GM12878 (cell line): ENCODE measurements at regions of chr1 and their contacts with region 1.

Region 1: GRCh38 chr1:184691719-184692324 is 62.8 kb downstream of the EDEM3 start:
- DNase-seq: no peak
- ATAC-seq: peak; percentile 42; the same call in 1 of the 3 replicates
- H3K4me3 ChIP-seq: no peak overlapping the region
- H3K27ac ChIP-seq: no peak overlapping the region
- H3K4me1 ChIP-seq: no peaks in the 10 kb centered on the region
- H3K27me3 ChIP-seq: no peaks in the 10 kb centered on the region
- CTCF ChIP-seq: peak; percentile 54 to 62 (median 58); a peak in 5 of 6 replicates
- EP300 ChIP-seq: no peak
- POLR2A ChIP-seq: no peak
- RAD21 ChIP-seq: peak; percentile 74

Region 2: DNA sequence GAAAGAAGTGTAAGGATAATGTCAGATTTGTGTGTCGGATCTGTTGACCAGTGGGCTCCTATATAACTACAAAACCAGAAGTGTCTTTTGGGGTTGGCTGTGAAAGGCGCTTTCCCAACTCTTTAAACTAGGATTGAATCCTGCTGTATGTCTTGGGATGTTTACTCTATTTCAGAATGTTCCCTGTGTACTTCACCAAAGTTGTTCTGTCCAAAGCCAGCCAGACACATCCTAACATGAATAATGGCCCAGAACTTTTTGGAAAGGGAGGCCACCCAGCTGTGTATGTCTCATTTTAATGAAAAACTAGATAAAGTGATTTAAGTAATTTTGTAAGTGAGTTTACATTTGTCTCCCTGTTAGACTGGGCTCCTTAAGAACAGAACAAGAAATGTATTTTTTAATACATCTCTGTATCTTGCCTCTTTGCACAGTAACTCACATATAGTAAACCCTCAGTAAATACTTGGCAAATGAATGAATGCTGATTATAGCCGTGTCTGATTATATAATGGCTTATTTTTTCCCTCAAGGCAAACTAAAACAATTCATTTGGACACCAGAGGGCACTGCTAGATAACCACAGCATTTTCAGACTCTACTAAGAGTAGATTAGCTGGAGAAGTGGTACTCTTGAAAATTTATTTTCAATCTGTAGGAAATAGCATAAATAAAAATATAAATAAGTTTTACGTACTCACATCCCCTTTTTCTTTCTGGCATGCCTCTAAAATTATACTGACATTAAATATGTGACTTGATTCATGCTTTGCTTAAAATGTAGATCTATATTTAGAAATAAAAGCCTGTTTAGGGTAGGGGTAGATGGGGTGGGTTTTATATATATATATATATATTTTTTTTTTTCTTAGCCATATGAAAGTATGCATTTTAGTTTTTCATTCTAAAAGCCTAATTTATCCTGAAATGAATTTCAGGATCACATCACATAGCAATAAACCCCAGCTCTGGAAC is 616.5 kb before region 1 on chr1:
- CTCF ChIA-PET with region 1: interaction called, 14 read pairs
- POLR2A ChIA-PET with region 1: no interaction called
- RAD21 ChIA-PET with region 1: interaction called, 3 read pairs
- SMC1A ChIA-PET with region 1: no interaction called
- in situ Hi-C with region 1: no loop called
- intact Hi-C with region 1: no loop called
- DNase-seq: no peak
- ATAC-seq: peak; percentile 91
- H3K4me3 ChIP-seq: no peak overlapping the region
- H3K27ac ChIP-seq: no peak overlapping the region
- H3K4me1 ChIP-seq: no peaks in the 10 kb centered on the region
- H3K27me3 ChIP-seq: no peaks in the 10 kb centered on the region
- CTCF ChIP-seq: peak; percentile 52 to 74 (median 62)
- EP300 ChIP-seq: 0 out of 4 replicates have a peak, but pooled peaks of 1 of the 2 experiments have one; percentile 12
- POLR2A ChIP-seq: no peak
- RAD21 ChIP-seq: peak; percentile 96

Region 3: GRCh38 chr1:184649451-184649888 is 42.4 kb before region 1 on chr1:
- CTCF ChIA-PET with region 1: no interaction called
- POLR2A ChIA-PET with region 1: no interaction called
- RAD21 ChIA-PET with region 1: no interaction called
- SMC1A ChIA-PET with region 1: no interaction called
- in situ Hi-C with region 1: no loop called
- intact Hi-C with region 1: no loop called
- DNase-seq: peak; percentile 57
- ATAC-seq: peak; percentile 55
- H3K4me3 ChIP-seq: peak overlapping the region; percentile 50; the same call in 1 of the 2 replicates
- H3K27ac ChIP-seq: peak overlapping the region; percentile 74
- H3K4me1 ChIP-seq: peaks cover 30% of the 10 kb centered on the region
- H3K27me3 ChIP-seq: no peaks in the 10 kb centered on the region
- CTCF ChIP-seq: no peak
- EP300 ChIP-seq: no peak
- POLR2A ChIP-seq: no peak
- RAD21 ChIP-seq: no peak

Region 4: DNA sequence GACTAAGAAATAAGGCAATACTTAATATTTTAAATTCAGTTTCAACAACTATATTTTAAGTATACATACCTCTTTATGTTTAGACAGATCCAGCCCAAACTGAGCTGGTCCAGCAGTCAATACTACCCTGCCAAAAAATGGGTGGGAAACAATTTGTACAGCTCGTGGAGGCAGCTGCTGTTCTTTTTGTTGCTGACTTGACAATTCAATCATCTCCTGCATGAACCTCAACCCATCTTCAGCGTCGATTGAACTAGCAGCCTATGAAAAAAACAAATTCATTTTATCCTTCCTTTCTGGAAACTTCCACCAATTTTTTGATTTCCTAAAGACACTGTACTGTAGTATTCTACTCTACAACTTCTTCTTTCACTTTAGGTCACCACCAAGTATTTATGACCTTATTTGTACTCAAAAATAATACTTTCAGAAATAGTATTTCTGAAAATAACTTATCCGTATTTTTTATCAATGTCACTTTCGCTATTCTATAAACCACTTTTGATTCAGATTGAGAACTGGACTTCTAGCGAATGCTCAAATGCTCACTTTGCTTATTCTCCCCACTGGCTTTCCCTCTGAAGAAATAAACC is 16.4 kb after region 1 on chr1:
- CTCF ChIA-PET with region 1: interaction called, 18 read pairs
- POLR2A ChIA-PET with region 1: no interaction called
- RAD21 ChIA-PET with region 1: no interaction called
- SMC1A ChIA-PET with region 1: interaction called, 4 read pairs
- in situ Hi-C with region 1: no loop called
- intact Hi-C with region 1: no loop called
- DNase-seq: no peak
- ATAC-seq: peak; percentile 42; the same call in 2 of the 3 replicates
- H3K4me3 ChIP-seq: no peak overlapping the region
- H3K27ac ChIP-seq: peak overlapping the region; percentile 52
- H3K4me1 ChIP-seq: peaks cover 8% of the 10 kb centered on the region; the same call in 1 of the 2 replicates
- H3K27me3 ChIP-seq: no peaks in the 10 kb centered on the region
- CTCF ChIP-seq: no peak
- EP300 ChIP-seq: no peak
- POLR2A ChIP-seq: no peak
- RAD21 ChIP-seq: no peak